ENCODE measurements at regions of chr10 and their contacts with region 1.

Region 1: GRCh38 chr10:91163269-91163868 is 57.1 kb upstream of the PCGF5 start:
- DNase-seq: peak; percentile 42 to 53 (median 45)
- ATAC-seq: peak; percentile 75
- H3K4me3 ChIP-seq: peak overlapping the region; percentile 78
- H3K27ac ChIP-seq: peak overlapping the region; percentile 81
- H3K4me1 ChIP-seq: peaks cover 8 to 16% of the 10 kb centered on the region in 2 experiments; a peak in 4 of 5 replicates
- H3K27me3 ChIP-seq: no peaks in the 10 kb centered on the region
- CTCF ChIP-seq: no peak
- EP300 ChIP-seq: no peak
- POLR2A ChIP-seq: no peak; the same call in 1 of the 2 replicates
- RAD21 ChIP-seq: no peak

Region 2: GRCh38 chr10:91103384-91104192 is 59.8 kb before region 1 on chr10:
- CTCF ChIA-PET with region 1: no interaction called
- POLR2A ChIA-PET with region 1: interaction called, 3 read pairs
- in situ Hi-C with region 1: no loop called
- intact Hi-C with region 1: loop called (anchors 5 kb)
- DNase-seq: peak; percentile 60 to 91 (median 76)
- ATAC-seq: peak; percentile 98
- H3K4me3 ChIP-seq: no peak overlapping the region
- H3K27ac ChIP-seq: peak overlapping the region; percentile 89
- H3K4me1 ChIP-seq: peaks cover 27 to 34% of the 10 kb centered on the region in 2 experiments
- H3K27me3 ChIP-seq: no peaks in the 10 kb centered on the region
- CTCF ChIP-seq: no peak
- EP300 ChIP-seq: peak; percentile 83
- POLR2A ChIP-seq: no peak
- RAD21 ChIP-seq: no peak

Region 3: GRCh38 chr10:91220194-91220953 is 57.0 kb after region 1 on chr10 and contains the start of gene PCGF5:
- CTCF ChIA-PET with region 1: no interaction called
- POLR2A ChIA-PET with region 1: interaction called, 3 read pairs
- in situ Hi-C with region 1: no loop called
- intact Hi-C with region 1: loop called (anchors 5 kb)
- DNase-seq: peak; percentile 85 to 89 (median 87)
- ATAC-seq: peak; percentile 98
- H3K4me3 ChIP-seq: peak within 1 kb of the TSS; percentile 88
- H3K27ac ChIP-seq: peak within 1 kb of the TSS; percentile 89
- H3K4me1 ChIP-seq: peaks cover 9 to 17% of the 10 kb centered on the region in 2 experiments; a peak in 4 of 5 replicates
- H3K27me3 ChIP-seq: no peaks in the 10 kb centered on the region
- CTCF ChIP-seq: peak; percentile 14 to 29 (median 15); a peak in 2 of 6 replicates
- EP300 ChIP-seq: peak; percentile 92
- POLR2A ChIP-seq: peak; percentile 56; the same call in 1 of the 2 replicates
- RAD21 ChIP-seq: no peak
- polyA plus RNA-seq, gene PCGF5: 11.7 TPM